Stomach (tissue), 19 donors: ENCODE measurements at regions of chr1 and their contacts with region 1.

Region 1: GRCh38 chr1:110339407-110340206 is 430 bp downstream of the RBM15 start:
- DNase-seq: peak; percentile 51 to 79
- H3K4me3 ChIP-seq: peak overlapping the region; percentile 90 to 95 (median 92)
- H3K27ac ChIP-seq: peak overlapping the region; percentile 81 to 98 (median 97)
- H3K4me1 ChIP-seq: peaks cover 55 to 72% (median 63%) of the 10 kb centered on the region in 4 donors
- H3K27me3 ChIP-seq: no peaks in the 10 kb centered on the region
- CTCF ChIP-seq: peak in 4 of 7 experiments; percentile 20 to 38 (median 28)
- EP300 ChIP-seq: no peak
- POLR2A ChIP-seq: peak in 2 of 4 donors; percentile 25 to 50

Region 2: DNA sequence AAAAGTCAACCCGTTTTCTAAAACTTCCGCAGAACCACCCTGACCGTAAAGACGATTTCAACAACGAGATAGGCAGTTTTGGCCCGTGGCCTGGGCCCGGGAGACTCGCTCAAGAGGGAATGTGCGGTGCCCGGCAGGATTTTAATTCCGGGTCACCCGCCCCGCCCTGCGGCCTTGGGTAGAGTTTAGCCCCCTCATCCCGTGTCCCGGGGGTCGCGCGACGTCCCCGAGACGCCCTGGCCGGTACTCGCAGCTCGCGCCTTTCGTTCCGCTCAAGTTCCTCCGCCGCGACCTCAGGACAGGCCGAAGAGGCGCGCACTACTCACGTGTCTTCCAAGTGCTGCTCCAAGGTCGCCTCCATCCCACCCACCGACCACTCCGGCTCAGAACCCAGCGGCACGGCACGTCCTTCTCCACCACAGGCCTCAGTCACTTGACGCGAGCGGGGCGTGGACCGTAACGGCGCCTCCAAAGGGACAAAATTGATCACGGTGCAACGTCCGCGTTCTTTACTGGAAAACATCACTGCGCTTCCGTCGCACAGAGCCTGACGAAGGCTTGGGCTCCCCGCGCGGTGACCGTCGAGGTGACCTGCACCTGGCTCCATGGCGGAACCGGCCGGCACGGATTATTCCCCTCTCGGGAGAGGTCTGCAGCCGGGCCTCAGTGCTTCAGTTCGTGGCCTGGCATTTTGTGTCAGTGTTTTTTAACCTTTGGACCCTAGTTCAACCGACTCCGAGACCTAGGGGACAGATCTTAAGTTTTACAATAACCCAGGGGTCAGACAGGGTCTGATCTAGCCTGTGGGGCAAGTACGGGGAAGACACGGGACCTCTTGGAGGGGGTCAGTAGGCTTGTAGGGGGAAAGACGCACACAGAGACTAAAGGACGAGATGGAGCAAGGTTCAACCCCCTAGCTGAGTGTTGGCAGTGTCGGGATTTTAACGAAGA is 67.9 kb after region 1 on chr1 and contains the start of gene LAMTOR5:
- intact Hi-C with region 1: loop called (anchors 10 kb)
- DNase-seq: peak; percentile 94 to 98
- H3K4me3 ChIP-seq: peak within 1 kb of the TSS; percentile 65 to 90 (median 86)
- H3K27ac ChIP-seq: peak within 1 kb of the TSS; percentile 92 to 97 (median 95)
- H3K4me1 ChIP-seq: peaks cover 17 to 38% (median 33%) of the 10 kb centered on the region in 4 donors
- H3K27me3 ChIP-seq: no peaks in the 10 kb centered on the region
- CTCF ChIP-seq: no peak
- EP300 ChIP-seq: no peak
- POLR2A ChIP-seq: peak in 2 of 4 donors; percentile 73 to 80
- total RNA-seq, gene LAMTOR5: 8.5 to 48.8 (median 18.6) TPM in 4 of 5 donors, not detected in the other